Calu3 (cell line): ENCODE measurements at regions of chr14 and their contacts with region 1.

Region 1: GRCh38 chr14:73503648-73504047 is 12.9 kb downstream of the RIOX1 start:
- DNase-seq: no peak
- H3K4me3 Mint-ChIP-seq: no peak overlapping the region
- H3K27ac Mint-ChIP-seq: no peak overlapping the region
- H3K4me1 Mint-ChIP-seq: no peaks in the 10 kb centered on the region
- H3K27me3 Mint-ChIP-seq: no peaks in the 10 kb centered on the region
- CTCF ChIP-seq: no peak

Region 2: GRCh38 chr14:73568381-73568781 is 64.7 kb after region 1 on chr14:
- CTCF ChIA-PET with region 1: interaction called, 14 read pairs
- intact Hi-C with region 1: no loop called
- DNase-seq: no peak
- H3K4me3 Mint-ChIP-seq: peak overlapping the region; percentile 86
- H3K27ac Mint-ChIP-seq: peak overlapping the region; percentile 33
- H3K4me1 Mint-ChIP-seq: peaks cover 12% of the 10 kb centered on the region
- H3K27me3 Mint-ChIP-seq: no peaks in the 10 kb centered on the region
- CTCF ChIP-seq: no peak